ENCODE measurements at regions of chr3 and their contacts with region 1.

Region 1: DNA sequence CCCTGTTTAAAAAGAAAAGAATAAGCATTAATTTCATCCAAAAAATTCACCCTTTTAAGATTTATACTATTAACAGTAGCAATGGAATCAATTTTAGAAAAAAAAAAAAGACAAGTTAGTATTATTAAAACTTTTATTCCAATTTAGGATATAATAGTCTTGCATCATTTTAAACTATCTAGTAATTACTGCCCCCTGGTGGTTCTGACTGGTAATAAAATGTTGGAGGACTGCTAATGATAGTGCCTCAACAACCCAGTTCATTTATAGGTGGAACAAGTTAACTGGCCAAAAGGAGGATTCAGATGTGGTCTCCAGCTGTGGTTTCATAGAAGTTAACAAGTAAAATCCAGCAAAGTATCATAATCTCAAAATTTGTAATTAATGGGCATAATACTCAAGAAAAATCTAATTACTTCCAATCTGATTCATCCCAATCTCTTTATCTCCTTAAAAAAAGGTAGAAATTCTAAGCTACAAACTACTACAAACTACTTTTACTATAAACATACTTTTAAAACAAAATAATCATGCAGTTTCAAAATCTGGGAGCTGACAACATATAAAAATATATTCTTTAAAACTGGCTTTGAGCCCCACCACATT is 30.7 kb upstream of the WDR49 start:
- DNase-seq: peak; percentile 75
- ATAC-seq: peak; percentile 71
- H3K4me3 ChIP-seq: no peak overlapping the region
- H3K4me3 Mint-ChIP-seq: no peak overlapping the region
- H3K27ac ChIP-seq: peak overlapping the region in 1 of 2 donors; percentile 44
- H3K27ac Mint-ChIP-seq: no peak overlapping the region
- H3K4me1 ChIP-seq: no peaks in the 10 kb centered on the region
- H3K4me1 Mint-ChIP-seq: no peaks in the 10 kb centered on the region
- H3K27me3 ChIP-seq: no peaks in the 10 kb centered on the region
- H3K27me3 Mint-ChIP-seq: no peaks in the 10 kb centered on the region
- CTCF ChIP-seq: peak; percentile 90

Region 2: DNA sequence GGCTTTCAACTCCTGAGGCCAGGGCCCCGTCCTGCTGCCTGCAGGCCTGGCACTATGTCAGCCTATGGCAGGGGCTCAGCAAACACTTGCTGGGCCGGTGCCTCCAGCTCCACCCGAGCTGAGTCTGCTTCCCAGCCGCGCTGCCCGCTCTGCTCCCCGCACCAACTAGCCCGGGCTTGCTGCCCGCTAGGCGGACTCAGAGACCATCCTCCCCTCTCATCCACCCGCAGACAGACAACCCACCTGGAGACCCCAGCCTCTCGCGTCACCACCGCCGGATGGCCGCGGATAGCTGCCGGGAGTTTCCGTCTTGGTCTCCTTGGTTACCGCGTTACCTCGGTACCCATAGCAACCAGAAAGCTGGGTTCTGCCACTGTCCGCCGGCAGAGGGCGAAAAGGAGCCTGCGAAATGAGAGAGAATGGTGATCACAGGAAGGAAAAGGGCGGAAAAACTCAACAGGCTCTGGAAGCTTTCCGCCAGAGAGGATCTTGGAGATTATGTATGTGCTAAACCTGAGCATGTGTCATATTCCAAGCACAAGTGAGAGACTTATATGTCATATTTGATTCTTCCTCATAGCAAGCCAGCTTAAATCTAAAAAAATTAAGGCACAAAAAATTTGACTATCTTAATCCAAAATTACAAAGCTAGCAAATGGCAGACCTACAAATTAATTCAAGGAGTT is 304.3 kb before region 1 on chr3 and contains the start of gene ZBBX:
- CTCF ChIA-PET with region 1: interaction called, 14 read pairs
- POLR2A ChIA-PET with region 1: no interaction called
- intact Hi-C with region 1: loop called (anchors 1 kb)
- DNase-seq: peak; percentile 92
- ATAC-seq: peak; percentile 95
- H3K4me3 ChIP-seq: peak within 1 kb of the TSS in 4 of 5 experiments; percentile 33 to 56 (median 48)
- H3K4me3 Mint-ChIP-seq: peak within 1 kb of the TSS; percentile 89
- H3K27ac ChIP-seq: peak within 1 kb of the TSS; percentile 13 to 45
- H3K27ac Mint-ChIP-seq: peak within 1 kb of the TSS; percentile 69
- H3K4me1 ChIP-seq: peaks cover 7 to 8% of the 10 kb centered on the region in 2 donors
- H3K4me1 Mint-ChIP-seq: peaks cover 8% of the 10 kb centered on the region
- H3K27me3 ChIP-seq: peaks cover 0 to 3% (median 0%) of the 10 kb centered on the region in 4 experiments
- H3K27me3 Mint-ChIP-seq: peaks cover 5% of the 10 kb centered on the region
- CTCF ChIP-seq: peak; percentile 91
- total RNA-seq, gene ZBBX: not detected in 2 replicates

Region 3: GRCh38 chr3:167740961-167741587 is 56.6 kb after region 1 on chr3:
- CTCF ChIA-PET with region 1: interaction called, 10 read pairs
- POLR2A ChIA-PET with region 1: no interaction called
- intact Hi-C with region 1: no loop called
- DNase-seq: peak; percentile 60
- ATAC-seq: peak; percentile 90
- H3K4me3 ChIP-seq: no peak overlapping the region
- H3K4me3 Mint-ChIP-seq: no peak overlapping the region
- H3K27ac ChIP-seq: no peak overlapping the region
- H3K27ac Mint-ChIP-seq: no peak overlapping the region
- H3K4me1 ChIP-seq: peaks cover 4 to 13% of the 10 kb centered on the region in 2 donors
- H3K4me1 Mint-ChIP-seq: peaks cover 20% of the 10 kb centered on the region
- H3K27me3 ChIP-seq: no peaks in the 10 kb centered on the region
- H3K27me3 Mint-ChIP-seq: no peaks in the 10 kb centered on the region
- CTCF ChIP-seq: peak; percentile 62

Region 4: DNA sequence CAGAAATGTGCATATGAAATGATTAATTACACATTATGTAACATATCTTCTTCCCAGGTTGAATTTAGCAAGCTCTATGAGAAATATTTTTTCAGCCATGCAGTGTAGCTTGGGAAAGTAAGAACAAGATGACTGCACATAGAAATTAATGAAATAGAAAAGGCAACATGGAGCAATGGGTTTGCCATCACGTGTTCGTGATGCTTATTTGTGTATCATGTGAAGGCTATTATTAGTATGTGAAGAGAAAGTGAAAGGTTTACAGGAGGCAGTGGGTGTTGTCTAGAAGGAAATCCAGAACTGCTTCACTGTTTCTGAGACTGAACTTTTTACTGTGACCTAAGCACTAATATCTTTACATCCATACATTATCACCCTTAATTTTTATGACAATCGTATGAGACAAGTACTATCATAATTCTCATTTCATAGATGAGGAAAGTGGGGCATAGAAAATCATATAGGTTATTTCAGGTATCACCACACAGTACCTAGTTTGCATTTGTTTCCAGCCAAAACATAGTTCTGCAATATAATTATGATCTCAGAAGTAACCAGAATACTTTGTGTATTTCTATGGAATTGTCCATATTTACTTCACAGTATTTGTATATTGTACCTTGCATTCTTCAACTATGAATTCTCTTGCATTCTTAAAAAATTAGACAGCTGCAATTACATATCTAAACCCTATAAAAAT is 65.9 kb after region 1 on chr3:
- CTCF ChIA-PET with region 1: no interaction called
- POLR2A ChIA-PET with region 1: interaction called, 13 read pairs
- intact Hi-C with region 1: no loop called
- DNase-seq: peak; percentile 83
- ATAC-seq: peak; percentile 87
- H3K4me3 ChIP-seq: peak overlapping the region in 3 of 5 experiments; percentile 13 to 45 (median 15)
- H3K4me3 Mint-ChIP-seq: peak overlapping the region; percentile 84
- H3K27ac ChIP-seq: peak overlapping the region; percentile 73 to 83
- H3K27ac Mint-ChIP-seq: peak overlapping the region; percentile 95
- H3K4me1 ChIP-seq: peaks cover 35 to 66% of the 10 kb centered on the region in 2 donors
- H3K4me1 Mint-ChIP-seq: peaks cover 77% of the 10 kb centered on the region
- H3K27me3 ChIP-seq: no peaks in the 10 kb centered on the region
- H3K27me3 Mint-ChIP-seq: no peaks in the 10 kb centered on the region
- CTCF ChIP-seq: no peak